ENCODE measurements at regions of chr11 and their contacts with region 1.

Region 1: DNA sequence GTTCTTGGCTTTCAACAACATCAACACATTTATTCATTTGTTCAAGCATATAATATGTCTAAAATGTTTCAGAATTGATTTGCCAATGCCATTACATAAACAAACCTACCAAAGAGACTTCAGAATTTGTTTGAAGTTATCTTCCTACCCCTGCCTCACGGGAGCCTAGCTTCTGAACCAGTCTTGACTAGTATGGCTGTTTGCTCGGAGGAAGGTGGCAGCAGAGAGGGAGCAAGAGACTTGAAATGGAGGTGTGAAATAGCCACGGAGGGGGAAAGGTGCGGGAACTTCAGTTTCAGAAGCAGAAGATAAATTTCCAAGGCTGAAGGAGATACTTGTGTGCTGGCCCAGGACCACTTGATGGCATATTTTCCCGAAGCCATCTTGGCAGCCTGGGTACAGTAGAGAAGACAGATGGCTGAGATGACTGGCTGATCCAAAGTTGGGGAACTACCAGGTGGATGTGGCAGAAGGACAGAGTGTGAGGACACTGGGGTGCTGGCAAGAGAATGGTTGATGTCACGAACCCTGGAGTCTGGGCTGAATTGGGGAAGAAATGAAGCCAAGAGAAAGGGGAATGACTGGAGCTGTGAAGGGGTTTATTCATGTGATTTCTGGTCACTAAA is 14.0 kb upstream of the MTCH2 start:
- DNase-seq: no peak
- H3K4me3 ChIP-seq: no peak overlapping the region
- H3K27ac ChIP-seq: no peak overlapping the region
- H3K4me1 ChIP-seq: no peaks in the 10 kb centered on the region
- H3K27me3 ChIP-seq: no peaks in the 10 kb centered on the region
- CTCF ChIP-seq: no peak
- POLR2A ChIP-seq: no peak

Region 2: DNA sequence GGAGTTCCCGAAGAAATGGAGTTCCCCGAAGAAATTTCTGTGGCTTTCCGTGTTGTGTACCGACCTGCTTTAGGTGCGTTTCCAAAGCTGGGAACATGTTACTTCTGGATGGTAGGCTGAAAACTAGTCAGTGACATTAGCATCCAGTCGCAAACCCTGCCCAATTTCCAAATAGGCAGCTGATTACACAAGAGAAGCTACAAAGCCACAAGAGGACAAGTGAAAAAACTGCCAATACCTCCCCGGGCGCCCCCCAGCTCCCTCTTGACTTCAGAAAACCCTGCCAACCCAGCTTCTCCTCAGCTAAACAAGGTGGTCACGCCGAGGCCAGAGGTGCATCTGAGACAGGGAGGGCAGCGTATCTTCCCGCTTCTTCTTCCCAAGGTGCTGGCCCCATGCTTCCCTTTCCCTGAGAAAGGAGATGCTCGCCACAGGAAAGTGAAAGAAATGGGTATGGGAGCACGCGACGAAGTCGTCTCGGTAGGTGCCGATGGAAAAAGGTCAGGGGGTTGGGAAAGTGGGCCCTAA is 58.2 kb after region 1 on chr11:
- intact Hi-C with region 1: loop called in 1 of 2 experiments (anchors 5 kb)
- DNase-seq: peak in 3 of 7 donors; percentile 16 to 25 (median 24)
- H3K4me3 ChIP-seq: peak overlapping the region; percentile 2 to 71 (median 64)
- H3K27ac ChIP-seq: peak overlapping the region in 4 of 5 donors; percentile 26 to 80 (median 60)
- H3K4me1 ChIP-seq: peaks cover 3 to 6% of the 10 kb centered on the region in 2 donors
- H3K27me3 ChIP-seq: no peaks in the 10 kb centered on the region
- CTCF ChIP-seq: no peak
- POLR2A ChIP-seq: no peak